ENCODE measurements at regions of chr1 and their contacts with region 1.

Region 1: GRCh38 chr1:156910309-156910782 is 10.1 kb upstream of the LRRC71 start:
- DNase-seq: peak; percentile 69
- ATAC-seq: no peak
- H3K4me3 Mint-ChIP-seq: no peak overlapping the region
- H3K27ac Mint-ChIP-seq: no peak overlapping the region
- H3K4me1 Mint-ChIP-seq: peaks cover 5% of the 10 kb centered on the region
- H3K27me3 Mint-ChIP-seq: peaks cover 3% of the 10 kb centered on the region

Region 2: DNA sequence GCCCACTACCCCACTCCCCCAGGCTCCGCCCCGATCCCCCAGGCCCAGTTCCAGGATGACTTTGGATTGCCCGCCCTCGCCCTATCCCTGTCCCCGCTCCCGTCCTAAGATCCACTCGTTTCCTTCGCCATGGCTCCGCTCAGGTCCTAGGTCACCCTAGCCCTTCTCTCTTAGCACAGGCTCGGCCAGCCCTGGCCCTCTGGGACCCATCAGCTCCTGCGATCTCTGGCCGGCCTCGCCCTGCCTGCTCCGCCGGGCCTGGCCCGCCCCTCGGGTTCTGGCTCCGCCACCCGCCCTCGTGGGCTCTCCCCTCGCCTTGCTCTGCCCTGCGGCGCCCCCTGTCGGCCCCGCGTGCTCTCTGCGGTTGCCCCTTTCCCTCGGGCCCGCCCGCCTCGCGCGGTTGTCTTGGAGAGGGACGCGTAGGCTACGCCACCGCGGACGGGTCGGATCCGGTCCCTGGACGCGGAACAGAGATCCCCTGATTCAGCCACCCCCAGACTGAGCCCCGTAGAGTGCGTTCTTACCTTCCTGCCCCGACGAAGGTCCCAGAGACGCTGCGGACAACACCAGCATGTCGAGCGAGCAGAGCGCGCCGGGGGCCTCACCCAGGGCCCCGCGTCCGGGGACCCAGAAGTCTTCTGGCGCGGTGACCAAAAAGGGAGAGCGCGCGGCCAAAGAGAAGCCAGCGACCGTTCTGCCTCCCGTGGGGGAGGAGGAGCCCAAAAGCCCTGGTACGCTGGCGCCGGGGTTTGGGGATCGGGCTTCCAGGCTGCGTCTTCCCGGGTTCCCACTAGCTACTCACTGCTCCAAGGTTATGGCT is 10.1 kb after region 1 on chr1 and contains the start of gene LRRC71:
- CTCF ChIA-PET with region 1: interaction called, 11 read pairs
- POLR2A ChIA-PET with region 1: interaction called, 4 read pairs
- DNase-seq: peak; percentile 81
- ATAC-seq: peak; percentile 92
- H3K4me3 Mint-ChIP-seq: no peak within 1 kb of the TSS
- H3K27ac Mint-ChIP-seq: no peak within 1 kb of the TSS
- H3K4me1 Mint-ChIP-seq: peaks cover 10% of the 10 kb centered on the region
- H3K27me3 Mint-ChIP-seq: peaks cover 75% of the 10 kb centered on the region
- total RNA-seq, gene LRRC71: not detected

Measured in activated CD8-positive, alpha-beta T cell treated with anti-CD3 and anti-CD28 coated beads, Interleukin-2, amount 10 ng/mL, durations not matched to agents 7 days and 5 days (primary cell).